ENCODE measurements at regions of chr20 and their contacts with region 1.

Region 1: GRCh38 chr20:51800060-51800794 is 2.1 kb downstream of the SALL4 start:
- DNase-seq: peak; percentile 24
- ATAC-seq: peak; percentile 86
- H3K4me3 ChIP-seq: peak overlapping the region; percentile 50 to 65
- H3K27ac ChIP-seq: peak overlapping the region; percentile 72
- H3K4me1 ChIP-seq: peaks cover 11% of the 10 kb centered on the region
- H3K27me3 ChIP-seq: no peaks in the 10 kb centered on the region
- CTCF ChIP-seq: peak; percentile 98

Region 2: GRCh38 chr20:52060794-52061714 is 260.8 kb after region 1 on chr20:
- CTCF ChIA-PET with region 1: no interaction called
- POLR2A ChIA-PET with region 1: no interaction called
- in situ Hi-C with region 1: no loop called
- intact Hi-C with region 1: loop called (anchors 5 kb)
- DNase-seq: peak; percentile 28
- ATAC-seq: peak; percentile 82
- H3K4me3 ChIP-seq: no peak overlapping the region
- H3K27ac ChIP-seq: peak overlapping the region; percentile 12; the same call in 1 of the 2 replicates
- H3K4me1 ChIP-seq: peaks cover 3% of the 10 kb centered on the region; the same call in 1 of the 2 replicates
- H3K27me3 ChIP-seq: no peaks in the 10 kb centered on the region
- CTCF ChIP-seq: peak; percentile 87

Measured in Panc1 (cell line).